Esophagus muscularis mucosa (tissue), 4 donors: ENCODE measurements at regions of chr1 and their contacts with region 1.

Region 1: DNA sequence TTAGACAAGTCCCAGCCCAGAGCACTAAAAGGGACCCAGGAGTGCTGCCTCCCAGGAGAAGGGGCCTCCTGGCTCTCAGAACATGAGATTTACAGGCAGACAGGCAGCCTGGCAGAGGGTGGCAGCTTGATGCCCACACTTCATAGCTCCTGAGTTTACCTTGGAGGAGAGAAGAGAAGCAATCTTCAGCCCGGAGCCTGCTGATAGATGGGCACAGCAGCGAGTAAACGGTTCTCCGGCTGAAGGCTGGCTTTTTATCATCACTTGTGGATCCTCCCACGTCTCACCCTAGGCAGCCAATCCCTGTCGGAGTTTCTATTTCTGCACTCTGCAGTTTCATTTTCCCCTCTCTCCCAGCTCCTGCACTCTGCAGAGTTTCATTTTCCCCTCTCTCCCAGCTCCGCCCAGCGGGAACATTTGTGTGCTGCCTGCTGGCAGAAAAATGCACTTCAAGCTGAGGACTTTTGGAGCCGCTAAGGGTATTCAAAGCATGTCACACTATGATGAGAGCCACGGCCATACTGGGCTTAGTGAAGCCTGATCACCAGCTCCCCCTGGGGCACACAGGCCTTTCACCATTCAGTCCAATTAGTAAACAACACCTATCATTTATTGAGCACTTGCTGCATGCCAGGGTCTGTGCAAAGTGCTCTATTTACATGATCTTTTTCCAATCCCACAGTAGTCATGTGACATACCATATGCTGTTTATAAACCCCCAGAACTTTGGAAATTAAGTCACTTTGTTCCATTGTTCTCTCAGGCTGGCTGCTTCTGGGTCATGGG is at the start of gene IFI6:
- DNase-seq: peak; percentile 95
- H3K4me3 ChIP-seq: peak within 1 kb of the TSS; percentile 57 to 65 (median 60)
- H3K27ac ChIP-seq: peak within 1 kb of the TSS; percentile 85 to 91 (median 88)
- H3K4me1 ChIP-seq: peaks cover 25 to 48% (median 39%) of the 10 kb centered on the region in 4 donors
- H3K27me3 ChIP-seq: no peaks in the 10 kb centered on the region
- CTCF ChIP-seq: peak; percentile 30 to 59 (median 50)
- EP300 ChIP-seq: no peak
- POLR2A ChIP-seq: no peak
- total RNA-seq, gene IFI6: 33.2 to 86.3 (median 70.2) TPM

Region 2: DNA sequence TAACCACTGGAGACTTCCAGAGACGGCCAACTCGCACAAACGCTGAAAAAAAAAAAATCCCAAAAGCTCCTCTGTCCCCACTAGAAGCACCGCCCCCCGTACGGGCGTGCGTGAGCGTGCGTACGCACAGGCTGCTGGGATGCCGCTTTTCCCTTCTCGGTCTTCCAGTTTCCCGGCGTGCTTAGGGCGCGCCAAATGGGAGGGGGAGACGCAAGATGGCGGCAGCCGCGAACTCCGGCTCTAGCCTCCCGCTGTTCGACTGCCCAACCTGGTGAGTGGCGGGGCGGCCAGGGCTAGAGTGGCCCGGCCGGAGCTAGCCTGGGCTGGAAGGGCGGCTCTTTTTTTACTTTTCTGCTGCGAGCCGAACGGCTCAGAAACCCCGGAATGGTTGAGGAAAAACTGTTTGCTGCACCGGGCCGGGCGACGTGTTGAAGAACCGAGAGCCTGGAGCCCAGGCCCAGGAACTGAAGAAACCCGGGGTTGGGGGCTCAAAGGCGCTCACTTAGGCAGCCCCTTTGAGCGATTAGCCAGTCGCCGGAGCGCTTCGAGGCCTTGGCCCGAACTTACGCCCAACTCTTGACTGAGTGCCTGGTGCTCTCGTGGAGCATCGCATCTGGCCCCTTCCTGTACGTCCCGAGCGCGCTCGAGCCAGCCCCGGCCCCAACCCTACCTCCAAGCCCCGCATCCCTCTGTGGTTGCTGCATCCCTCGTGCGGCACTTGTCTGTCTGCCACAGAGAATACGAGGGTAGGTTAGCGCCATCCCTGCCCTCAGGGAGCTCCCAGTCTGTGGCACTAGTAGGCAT is 158.7 kb after region 1 on chr1 and contains the start of gene PPP1R8:
- intact Hi-C with region 1: loop called (anchors 10 kb)
- DNase-seq: peak; percentile 96
- H3K4me3 ChIP-seq: peak within 1 kb of the TSS; percentile 85 to 95 (median 90)
- H3K27ac ChIP-seq: peak within 1 kb of the TSS; percentile 85 to 92 (median 92)
- H3K4me1 ChIP-seq: peaks cover 15 to 38% (median 25%) of the 10 kb centered on the region in 4 donors
- H3K27me3 ChIP-seq: no peaks in the 10 kb centered on the region
- CTCF ChIP-seq: no peak
- EP300 ChIP-seq: no peak
- POLR2A ChIP-seq: peak; percentile 62
- total RNA-seq, gene PPP1R8: 33.2 to 51.6 (median 42.0) TPM